Activated T-helper 1 cell treated with anti-CD3 and anti-CD28 coated beads, Interleukin-12 subunit alpha, Interleukin-12 subunit beta, Interleukin-2, Interleukin-4 antibody, amounts not matched to agents 30 ng/mL and 10 ng/mL and 1 ng/mL, durations not matched to agents 14 hours and 24 hours and 36 hours (primary cell): ENCODE measurements at regions of chr14 and their contacts with region 1.

Region 1: GRCh38 chr14:105248368-105248756 is at the start of gene BTBD6:
- DNase-seq: peak; percentile 87
- H3K4me3 Mint-ChIP-seq: peak within 1 kb of the TSS; percentile 83
- H3K27ac Mint-ChIP-seq: peak within 1 kb of the TSS; percentile 87
- H3K4me1 Mint-ChIP-seq: peaks cover 16% of the 10 kb centered on the region
- H3K27me3 Mint-ChIP-seq: no peaks in the 10 kb centered on the region
- total RNA-seq, gene BTBD6: 41.1 and 41.9 TPM in 2 replicates

Region 2: GRCh38 chr14:105123981-105124765 is 124.2 kb before region 1 on chr14:
- intact Hi-C with region 1: no loop called
- DNase-seq: no peak
- H3K4me3 Mint-ChIP-seq: no peak overlapping the region
- H3K27ac Mint-ChIP-seq: no peak overlapping the region
- H3K4me1 Mint-ChIP-seq: no peaks in the 10 kb centered on the region
- H3K27me3 Mint-ChIP-seq: peaks cover 16% of the 10 kb centered on the region

Region 3: GRCh38 chr14:105180592-105181548 is 67.5 kb before region 1 on chr14 and contains the start of gene NUDT14:
- intact Hi-C with region 1: loop called (anchors 10 kb)
- DNase-seq: peak; percentile 72
- H3K4me3 Mint-ChIP-seq: peak within 1 kb of the TSS; percentile 72
- H3K27ac Mint-ChIP-seq: no peak within 1 kb of the TSS
- H3K4me1 Mint-ChIP-seq: peaks cover 5% of the 10 kb centered on the region
- H3K27me3 Mint-ChIP-seq: peaks cover 17% of the 10 kb centered on the region
- total RNA-seq, gene NUDT14: 8.5 and 10.9 TPM in 2 replicates

Region 4: DNA sequence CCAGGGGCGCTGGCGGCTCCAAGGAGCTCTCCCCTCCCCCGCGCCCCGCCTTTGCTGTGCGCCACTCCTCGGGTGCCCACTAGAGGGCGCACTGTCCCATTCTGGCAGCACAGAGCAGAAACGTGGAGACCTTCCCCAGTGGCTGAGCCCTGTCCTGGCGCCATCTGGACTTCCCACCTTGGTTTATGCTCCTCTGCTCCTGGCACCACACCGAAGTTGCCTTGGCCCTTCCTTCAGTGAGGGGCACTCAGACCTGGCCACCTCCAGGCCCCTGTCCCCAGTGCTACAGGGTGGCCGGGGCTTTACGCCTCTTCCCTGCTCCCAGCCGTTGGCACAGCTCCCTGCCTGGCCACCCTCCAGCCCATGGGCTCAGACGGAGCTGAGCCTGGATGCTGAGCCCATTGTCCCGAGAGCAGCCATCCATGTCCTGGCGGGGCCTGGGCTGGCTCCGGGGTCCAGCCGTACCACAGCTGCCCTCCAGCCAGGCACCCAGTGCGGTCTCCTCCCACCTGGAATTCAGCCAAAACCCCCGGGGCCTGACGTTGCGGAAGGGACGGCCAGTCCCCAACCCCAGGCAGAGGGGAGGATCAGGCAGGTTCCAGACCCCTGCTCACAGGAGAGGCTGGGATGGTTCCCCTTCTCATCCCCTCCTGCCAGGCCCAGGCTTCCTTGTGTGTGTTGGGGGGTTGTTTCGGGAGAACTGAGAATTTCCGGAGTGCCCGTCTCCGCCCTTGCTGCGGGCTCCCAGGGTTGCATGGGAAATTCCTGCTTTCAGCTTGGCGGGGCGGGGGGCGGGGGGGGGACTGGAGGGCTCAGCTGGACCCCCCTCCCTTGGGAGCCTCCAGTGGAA is 232.8 kb after region 1 on chr14:
- intact Hi-C with region 1: loop called (anchors 10 kb)
- DNase-seq: peak; percentile 86
- H3K4me3 Mint-ChIP-seq: peak overlapping the region; percentile 65
- H3K27ac Mint-ChIP-seq: peak overlapping the region; percentile 98
- H3K4me1 Mint-ChIP-seq: peaks cover 30% of the 10 kb centered on the region
- H3K27me3 Mint-ChIP-seq: peaks cover 22% of the 10 kb centered on the region